Left ventricle myocardium superior (tissue), 1 donor: ENCODE measurements at regions of chr17 and their contacts with region 1.

Region 1: DNA sequence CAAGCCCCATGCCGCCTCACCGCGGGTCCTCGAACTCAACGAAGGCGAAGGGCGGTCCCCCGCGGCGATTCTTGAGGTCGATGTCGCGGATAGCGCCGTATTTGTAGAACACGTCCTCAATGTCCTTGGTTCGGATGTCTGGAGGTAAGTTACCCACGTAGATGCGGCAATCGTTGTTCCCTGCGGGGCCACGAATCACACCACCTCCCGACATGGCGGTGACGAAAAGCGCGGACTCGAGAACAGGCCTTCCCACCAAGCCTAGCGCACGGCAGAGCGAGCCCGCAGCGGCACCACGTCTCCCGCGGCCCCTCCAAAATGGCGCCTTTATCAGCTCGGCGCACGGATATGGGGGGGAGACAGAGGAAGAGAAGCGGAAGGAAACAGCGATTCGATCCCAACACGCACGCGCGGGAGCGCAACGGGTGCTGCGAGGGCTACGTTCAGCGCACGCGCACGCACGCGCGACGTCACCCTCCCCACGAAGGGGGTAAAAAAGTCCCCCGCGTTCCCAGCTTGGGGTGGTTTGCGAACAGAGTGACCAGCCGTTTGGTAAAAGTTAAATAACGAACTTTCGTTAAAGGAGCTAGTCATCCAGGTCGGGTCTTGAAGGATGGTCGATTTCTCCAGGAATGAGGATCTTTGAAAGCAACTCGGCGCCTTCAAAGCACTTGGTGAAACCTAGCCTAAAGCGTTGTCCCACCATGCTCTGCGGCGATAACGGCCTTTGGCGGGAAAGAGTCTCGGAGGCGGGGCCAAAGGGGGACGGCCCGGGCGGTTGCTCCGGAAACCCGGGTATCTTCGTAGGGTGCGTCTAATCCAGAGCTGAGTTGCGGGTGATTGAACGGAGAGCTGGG is at the start of gene SRSF1:
- DNase-seq: peak; percentile 99
- ATAC-seq: peak; percentile 96
- total RNA-seq, gene SRSF1: 98.1 TPM

Region 2: GRCh38 chr17:57911834-57912673 is 95.1 kb before region 1 on chr17:
- intact Hi-C with region 1: no loop called
- DNase-seq: peak; percentile 95
- ATAC-seq: peak; percentile 89

Region 3: DNA sequence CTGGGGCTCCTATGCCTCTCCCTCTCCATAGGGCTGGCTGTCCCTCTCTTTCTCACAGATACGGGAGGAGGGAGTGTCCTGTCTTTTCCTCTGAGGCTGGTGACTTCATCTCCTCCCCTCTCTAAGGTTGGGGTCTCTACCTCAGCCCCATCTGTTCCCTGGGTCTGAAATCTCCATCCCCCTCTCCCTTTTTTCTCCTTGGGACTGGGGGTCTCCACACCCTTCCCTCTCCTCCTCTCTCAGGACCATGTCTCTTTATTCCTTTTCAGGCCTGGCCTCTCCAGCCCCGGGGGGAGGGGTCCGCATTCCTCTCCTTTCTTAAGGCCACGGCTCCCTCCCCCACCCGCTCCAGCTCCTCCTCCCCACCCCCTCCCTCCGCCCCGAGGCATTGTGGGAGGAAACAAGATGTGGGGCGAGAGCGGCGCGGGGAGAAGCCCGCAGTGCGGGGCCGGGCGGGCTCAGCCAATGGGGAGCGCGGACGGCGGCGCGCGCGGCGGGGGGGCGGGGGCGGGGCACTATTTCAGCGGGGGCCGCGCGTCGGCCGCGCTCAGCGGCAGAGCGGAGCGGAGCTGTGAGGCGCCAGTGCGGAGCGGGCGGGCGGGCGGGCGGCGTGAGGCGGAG is 75.8 kb after region 1 on chr17 and contains the start of gene DYNLL2:
- intact Hi-C with region 1: loop called (anchors 10 kb)
- DNase-seq: peak; percentile 97
- ATAC-seq: peak; percentile 90
- total RNA-seq, gene DYNLL2: 80.5 TPM